IMR-90 (cell line): ENCODE measurements at regions of chr11 and their contacts with region 1.

Region 1: GRCh38 chr11:118659314-118659952 is 20.0 kb downstream of the TREH start:
- DNase-seq: peak; percentile 71
- ATAC-seq: peak; percentile 89
- H3K4me3 ChIP-seq: no peak overlapping the region
- H3K27ac ChIP-seq: no peak overlapping the region
- H3K4me1 ChIP-seq: no peaks in the 10 kb centered on the region
- H3K27me3 ChIP-seq: no peaks in the 10 kb centered on the region
- CTCF ChIP-seq: peak; percentile 98
- POLR2A ChIP-seq: peak; percentile 41
- RAD21 ChIP-seq: peak; percentile 71

Region 2: DNA sequence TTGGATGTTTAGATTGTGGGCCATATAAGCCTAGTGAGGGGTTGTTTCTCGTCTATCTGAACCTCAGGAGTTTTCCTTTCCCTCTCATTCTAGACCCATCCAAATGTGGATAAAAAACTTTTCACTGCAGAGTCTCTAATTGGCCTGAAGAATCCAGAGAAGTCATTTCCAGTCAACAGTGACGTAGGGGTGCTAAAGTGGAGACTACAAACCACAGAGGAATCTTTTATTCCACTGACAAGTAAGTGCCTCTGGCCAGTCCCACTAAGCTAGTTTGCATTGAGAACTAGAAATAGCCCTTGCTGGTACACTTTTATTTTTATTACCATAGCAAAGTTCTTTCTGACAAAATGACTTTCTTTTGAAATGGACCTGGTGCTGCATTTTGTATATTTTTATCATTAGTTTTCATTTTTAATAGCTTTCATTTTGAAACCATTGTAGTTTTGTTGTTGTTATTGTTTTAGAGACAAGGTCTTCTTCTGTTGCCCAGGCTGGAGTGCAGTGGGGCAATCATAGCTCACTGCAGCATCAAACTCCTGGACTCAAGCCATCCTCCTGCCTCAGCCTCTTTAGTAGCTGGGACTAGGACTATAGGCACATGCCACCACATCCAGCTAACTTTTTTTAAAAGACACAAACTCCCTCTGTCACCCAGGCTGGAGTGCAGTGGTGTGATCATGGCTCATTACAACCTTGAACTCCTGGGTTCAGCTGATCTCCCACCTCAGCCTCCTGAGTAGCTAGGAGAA is 66.6 kb before region 1 on chr11:
- CTCF ChIA-PET with region 1: no interaction called
- POLR2A ChIA-PET with region 1: no interaction called
- dilution Hi-C with region 1: no loop called
- in situ Hi-C with region 1: no loop called
- intact Hi-C with region 1: loop called (anchors 1 kb)
- DNase-seq: no peak
- ATAC-seq: 0 out of 2 replicates have a peak, but pooled peaks have one; percentile 13
- H3K4me3 ChIP-seq: no peak overlapping the region
- H3K27ac ChIP-seq: no peak overlapping the region
- H3K4me1 ChIP-seq: peaks cover 2% of the 10 kb centered on the region; the same call in 1 of the 2 replicates
- H3K27me3 ChIP-seq: no peaks in the 10 kb centered on the region
- CTCF ChIP-seq: no peak
- POLR2A ChIP-seq: no peak
- RAD21 ChIP-seq: no peak

Region 3: GRCh38 chr11:118607401-118608359 is 51.8 kb before region 1 on chr11 and contains the start of gene PHLDB1:
- CTCF ChIA-PET with region 1: no interaction called
- POLR2A ChIA-PET with region 1: interaction called, 3 read pairs
- dilution Hi-C with region 1: no loop called
- in situ Hi-C with region 1: no loop called
- intact Hi-C with region 1: loop called (anchors 5 kb)
- DNase-seq: peak; percentile 67
- ATAC-seq: peak; percentile 35
- H3K4me3 ChIP-seq: peak within 1 kb of the TSS; percentile 93
- H3K27ac ChIP-seq: peak within 1 kb of the TSS; percentile 90
- H3K4me1 ChIP-seq: peaks cover 40% of the 10 kb centered on the region
- H3K27me3 ChIP-seq: no peaks in the 10 kb centered on the region
- CTCF ChIP-seq: peak; percentile 60
- POLR2A ChIP-seq: peak; percentile 88
- RAD21 ChIP-seq: peak; percentile 37
- total RNA-seq, gene PHLDB1: 40.0 and 41.7 TPM in 2 replicates

Region 4: GRCh38 chr11:118928108-118928870 is 268.9 kb after region 1 on chr11:
- CTCF ChIA-PET with region 1: no interaction called
- POLR2A ChIA-PET with region 1: no interaction called
- dilution Hi-C with region 1: no loop called
- in situ Hi-C with region 1: no loop called
- intact Hi-C with region 1: loop called (anchors 1 kb)
- DNase-seq: peak; percentile 92
- ATAC-seq: peak; percentile 68
- H3K4me3 ChIP-seq: peak overlapping the region; percentile 69
- H3K27ac ChIP-seq: peak overlapping the region; percentile 88
- H3K4me1 ChIP-seq: peaks cover 3% of the 10 kb centered on the region; the same call in 1 of the 2 replicates
- H3K27me3 ChIP-seq: no peaks in the 10 kb centered on the region
- CTCF ChIP-seq: peak; percentile 88
- POLR2A ChIP-seq: no peak
- RAD21 ChIP-seq: peak; percentile 81